ENCODE measurements at regions of chr13 and their contacts with region 1.

Region 1: DNA sequence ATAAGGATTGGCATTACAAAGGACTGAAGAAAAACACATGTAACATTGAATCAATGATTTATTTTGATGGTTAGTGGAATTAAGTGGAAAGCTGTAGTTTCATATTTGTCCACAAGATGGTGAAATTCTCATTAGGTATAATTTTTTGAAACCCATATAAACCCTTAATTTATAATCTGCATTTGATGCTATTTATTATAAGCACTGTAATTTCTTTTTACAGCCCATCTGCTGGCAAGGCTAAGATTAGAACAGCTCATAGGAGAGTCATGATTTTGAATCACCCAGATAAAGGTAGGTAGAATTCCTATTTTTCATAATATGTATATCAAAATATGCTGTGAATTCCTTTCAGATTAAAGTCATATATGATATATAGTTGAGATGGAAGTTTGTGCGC is 62.2 kb downstream of the DNAJC15 start:
- DNase-seq: peak in 2 of 5 donors; percentile 57 to 62
- H3K4me3 ChIP-seq: no peak overlapping the region
- H3K27ac ChIP-seq: no peak overlapping the region
- H3K4me1 ChIP-seq: no peaks in the 10 kb centered on the region
- H3K27me3 ChIP-seq: no peaks in the 10 kb centered on the region
- CTCF ChIP-seq: peak; percentile 41

Region 2: DNA sequence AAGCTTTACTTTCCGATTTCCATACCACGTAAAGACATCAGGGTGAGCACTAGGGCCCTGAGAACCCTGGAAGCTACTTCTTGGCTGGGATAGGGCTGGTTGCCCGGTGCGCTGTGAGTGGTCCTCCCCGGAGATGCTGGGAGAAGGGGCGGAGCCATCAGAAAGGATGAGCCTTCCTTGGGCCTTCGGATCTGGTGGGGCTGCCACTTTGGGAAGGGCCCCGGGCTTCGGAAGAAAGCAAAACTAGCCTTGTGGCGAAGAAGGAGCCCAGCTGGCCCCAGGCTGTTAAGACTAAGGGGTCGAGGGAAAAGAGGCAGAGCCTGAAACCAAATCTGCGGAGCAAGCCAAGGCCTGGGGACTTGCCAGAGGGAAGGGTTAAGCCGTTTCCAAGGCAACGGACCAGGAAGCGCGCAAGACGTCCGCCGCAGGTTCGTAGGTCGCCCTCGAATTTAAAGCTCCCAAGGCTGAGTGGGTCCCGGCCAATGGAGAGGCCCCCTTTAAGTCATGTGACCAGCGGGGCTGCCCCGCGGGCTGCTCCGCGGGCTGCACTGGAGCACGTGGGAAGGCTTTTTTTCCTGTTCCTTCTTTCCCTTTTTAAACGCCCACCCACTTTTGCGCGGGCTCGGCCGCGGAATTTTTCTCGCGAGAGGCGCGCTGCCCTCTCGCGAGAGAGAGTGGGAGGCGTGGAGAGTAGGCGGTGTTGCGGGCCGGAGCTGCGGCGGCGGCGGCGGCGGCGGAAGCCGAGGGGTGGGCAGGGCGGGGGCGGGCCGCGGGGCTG is 814.0 kb before region 1 on chr13:
- intact Hi-C with region 1: no loop called
- DNase-seq: peak; percentile 97 to 99 (median 98)
- H3K4me3 ChIP-seq: peak overlapping the region; percentile 72 to 93 (median 80)
- H3K27ac ChIP-seq: peak overlapping the region; percentile 34 to 81
- H3K4me1 ChIP-seq: peaks cover 0 to 7% (median 4%) of the 10 kb centered on the region in 3 donors
- H3K27me3 ChIP-seq: no peaks in the 10 kb centered on the region
- CTCF ChIP-seq: no peak

Region 3: DNA sequence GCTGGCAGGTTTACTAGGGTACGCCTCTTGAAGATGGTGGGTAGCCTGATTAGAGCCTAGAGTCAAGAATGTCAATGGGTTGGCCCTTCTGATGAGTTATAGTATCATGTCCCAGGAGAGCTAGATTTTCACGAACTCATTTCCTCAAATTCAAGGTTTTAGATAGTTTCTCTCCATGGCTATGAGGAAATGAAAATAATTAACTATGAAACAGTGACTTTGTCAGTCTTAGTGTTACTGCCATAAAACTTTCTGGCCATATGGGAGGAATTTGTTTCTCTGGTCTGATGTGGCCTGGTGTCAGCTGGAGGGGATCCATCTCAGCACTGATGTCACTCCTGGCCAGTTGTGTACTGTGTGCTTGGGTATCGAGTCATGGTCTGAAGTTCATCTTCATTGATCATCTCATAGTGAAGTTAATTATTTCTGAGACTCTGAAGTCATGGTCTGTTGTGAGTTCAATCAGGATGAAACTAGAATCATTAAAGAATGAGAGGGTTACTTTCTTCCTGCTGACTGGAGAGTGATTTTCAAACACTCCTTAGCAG is 561.0 kb before region 1 on chr13:
- intact Hi-C with region 1: no loop called
- DNase-seq: peak in 1 of 5 donors; percentile 24
- H3K4me3 ChIP-seq: no peak overlapping the region
- H3K27ac ChIP-seq: peak overlapping the region; percentile 19 to 42
- H3K4me1 ChIP-seq: peaks cover 0 to 7% (median 2%) of the 10 kb centered on the region in 3 donors
- H3K27me3 ChIP-seq: no peaks in the 10 kb centered on the region
- CTCF ChIP-seq: no peak

Region 4: GRCh38 chr13:42786715-42787114 is 298.8 kb before region 1 on chr13:
- intact Hi-C with region 1: no loop called
- DNase-seq: peak in 3 of 5 donors; percentile 36 to 72 (median 62)
- H3K4me3 ChIP-seq: no peak overlapping the region
- H3K27ac ChIP-seq: no peak overlapping the region
- H3K4me1 ChIP-seq: no peaks in the 10 kb centered on the region
- H3K27me3 ChIP-seq: no peaks in the 10 kb centered on the region
- CTCF ChIP-seq: no peak

Region 5: GRCh38 chr13:43397111-43397510 is 311.6 kb after region 1 on chr13:
- intact Hi-C with region 1: no loop called
- DNase-seq: no peak
- H3K4me3 ChIP-seq: no peak overlapping the region
- H3K27ac ChIP-seq: no peak overlapping the region
- H3K4me1 ChIP-seq: no peaks in the 10 kb centered on the region
- H3K27me3 ChIP-seq: no peaks in the 10 kb centered on the region
- CTCF ChIP-seq: no peak

Region 6: DNA sequence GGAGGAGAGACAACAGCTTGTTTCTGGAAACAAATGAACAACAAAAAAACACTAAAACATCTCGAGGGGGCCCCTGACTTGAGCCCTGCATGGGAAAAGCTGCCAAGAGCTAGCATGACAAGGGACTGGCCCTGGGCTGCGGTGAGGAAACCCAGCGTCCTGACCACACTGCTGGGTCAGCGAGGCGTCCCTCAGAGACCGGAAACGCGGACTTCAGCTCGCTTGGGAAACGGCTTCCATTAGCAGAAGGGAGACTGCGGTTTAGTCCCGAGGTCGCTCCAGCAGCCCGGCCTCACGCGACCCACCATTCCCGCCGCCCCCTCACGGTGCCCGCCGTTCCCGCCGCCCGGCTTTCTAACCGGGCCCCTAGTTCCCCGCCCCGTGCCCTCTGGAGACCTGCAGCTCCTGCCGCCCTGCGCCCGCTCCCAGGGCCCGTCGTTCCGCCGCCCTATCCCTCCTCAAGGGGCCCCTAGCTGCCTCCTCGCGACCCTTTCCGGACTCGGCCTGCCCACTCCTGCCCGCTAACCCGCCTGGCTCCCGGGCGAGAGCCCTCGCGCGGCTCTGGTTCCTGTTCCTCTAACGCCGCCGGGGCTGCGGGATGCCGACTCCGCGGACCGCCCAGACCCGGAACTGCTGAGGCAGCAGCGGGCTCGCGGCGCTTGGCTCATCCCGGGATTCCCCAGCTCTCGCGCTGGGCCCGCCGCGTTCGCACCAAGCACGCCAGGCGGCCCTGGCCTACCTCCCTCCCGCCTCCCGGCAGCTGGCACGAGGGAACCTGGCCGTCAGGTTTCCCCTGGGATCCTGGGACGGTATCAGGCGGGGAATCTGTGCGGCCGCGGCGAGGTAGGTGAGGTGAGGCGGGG is 793.6 kb after region 1 on chr13 and contains the start of gene CCDC122:
- intact Hi-C with region 1: loop called (anchors 10 kb)
- DNase-seq: peak; percentile 82 to 95 (median 88)
- H3K4me3 ChIP-seq: peak within 1 kb of the TSS; percentile 53 to 85 (median 57)
- H3K27ac ChIP-seq: peak within 1 kb of the TSS; percentile 95 to 97
- H3K4me1 ChIP-seq: peaks cover 0 to 7% (median 5%) of the 10 kb centered on the region in 3 donors
- H3K27me3 ChIP-seq: no peaks in the 10 kb centered on the region
- CTCF ChIP-seq: no peak
- total RNA-seq, gene CCDC122: 11.7 TPM

Measured in kidney (tissue), 22 donors.